Heart right ventricle (tissue), 16 donors: ENCODE measurements at regions of chr14 and their contacts with region 1.

Region 1: GRCh38 chr14:73753959-73754882 is 40.0 kb upstream of the PNMA1 start:
- DNase-seq: peak in 1 of 2 donors; percentile 41
- ATAC-seq: peak; percentile 2 to 39 (median 19)
- H3K4me3 ChIP-seq: peak overlapping the region in 7 of 10 donors; percentile 12 to 43 (median 22)
- H3K27ac ChIP-seq: peak overlapping the region; percentile 72 to 100 (median 98)
- H3K4me1 ChIP-seq: peaks cover 84 to 99% (median 97%) of the 10 kb centered on the region in 9 donors
- H3K27me3 ChIP-seq: no peaks in the 10 kb centered on the region
- CTCF ChIP-seq: no peak

Region 2: GRCh38 chr14:72763892-72764291 is 990.3 kb before region 1 on chr14:
- intact Hi-C with region 1: no loop called
- DNase-seq: no peak
- ATAC-seq: no peak
- H3K4me3 ChIP-seq: no peak overlapping the region
- H3K27ac ChIP-seq: no peak overlapping the region
- H3K4me1 ChIP-seq: no peaks in the 10 kb centered on the region
- H3K27me3 ChIP-seq: no peaks in the 10 kb centered on the region
- CTCF ChIP-seq: no peak

Region 3: DNA sequence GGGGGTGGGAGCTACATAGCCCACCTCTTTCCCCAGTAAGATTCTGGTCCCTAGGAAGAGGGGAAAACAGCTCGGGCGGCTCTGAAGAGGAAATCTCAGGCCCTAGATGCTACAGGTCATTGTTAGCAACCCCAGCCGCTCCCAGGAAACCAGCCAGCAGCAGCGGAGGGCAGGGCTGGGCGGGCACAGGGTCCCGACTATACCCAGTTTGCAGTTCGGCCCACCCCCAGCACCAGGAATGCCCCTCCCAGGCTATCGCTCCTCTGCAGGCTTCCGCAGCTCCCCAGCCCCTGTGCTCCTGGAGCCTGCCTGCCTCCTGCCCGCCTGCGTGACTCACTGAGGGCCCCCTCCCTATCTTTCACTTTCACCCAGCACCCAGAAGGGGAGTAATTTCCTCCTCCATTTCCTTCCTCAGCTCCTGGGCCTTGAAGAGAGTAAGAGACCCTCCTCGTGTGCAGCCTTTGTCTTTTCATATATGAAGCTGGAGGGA is 12.8 kb before region 1 on chr14:
- intact Hi-C with region 1: loop called in 1 of 10 experiments (anchors 2 kb)
- DNase-seq: peak; percentile 81 to 84
- ATAC-seq: peak; percentile 75 to 90 (median 81)
- H3K4me3 ChIP-seq: peak overlapping the region in 8 of 10 donors; percentile 11 to 44 (median 36)
- H3K27ac ChIP-seq: peak overlapping the region; percentile 26 to 89 (median 85)
- H3K4me1 ChIP-seq: peaks cover 75 to 86% (median 81%) of the 10 kb centered on the region in 9 donors
- H3K27me3 ChIP-seq: no peaks in the 10 kb centered on the region
- CTCF ChIP-seq: peak in 1 of 9 donors; percentile 9

Region 4: DNA sequence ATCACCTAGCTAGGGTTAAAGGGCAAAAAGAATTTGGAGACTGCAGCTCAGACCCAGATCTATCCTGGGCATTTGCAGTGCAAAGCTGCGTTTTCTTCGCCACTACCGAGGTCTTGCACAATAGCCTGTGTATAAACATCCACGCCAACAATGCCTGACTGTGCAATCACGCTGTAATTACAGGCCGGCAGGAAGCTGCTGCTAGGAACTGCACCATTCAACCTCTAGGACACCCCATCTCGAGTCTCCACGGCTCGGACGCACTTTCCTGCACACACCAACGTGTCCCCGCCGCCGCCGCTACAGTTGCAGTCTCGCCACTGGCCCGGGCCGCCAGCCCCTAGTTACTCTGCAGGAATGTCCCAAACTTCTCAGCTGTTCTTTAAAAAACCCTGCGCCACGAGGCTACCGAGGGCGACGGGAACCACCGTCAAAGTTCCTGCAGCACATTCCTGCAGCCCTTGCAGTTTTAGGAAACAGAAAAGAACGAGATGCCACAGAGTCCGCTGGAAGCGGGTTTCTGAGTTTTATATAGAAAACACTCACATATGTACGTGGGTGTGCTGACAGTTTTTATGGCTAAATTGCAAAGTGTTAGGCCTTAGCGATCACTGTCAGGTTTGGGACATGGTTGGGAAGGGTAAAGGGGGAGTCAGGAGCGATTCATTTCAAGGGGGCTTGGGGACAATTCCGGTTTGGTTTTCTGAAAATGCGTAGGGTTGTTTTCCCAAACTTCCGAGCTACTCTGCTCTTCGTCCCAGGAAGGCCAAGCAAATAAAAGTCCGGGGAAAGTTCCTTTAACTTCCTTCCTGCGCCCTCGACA is 31.9 kb after region 1 on chr14:
- intact Hi-C with region 1: loop called in 8 of 10 experiments (anchors 2 to 5 kb)
- DNase-seq: peak; percentile 65 to 73
- ATAC-seq: peak; percentile 67 to 78 (median 74)
- H3K4me3 ChIP-seq: peak overlapping the region; percentile 48 to 98 (median 76)
- H3K27ac ChIP-seq: peak overlapping the region; percentile 97 to 100 (median 98)
- H3K4me1 ChIP-seq: peaks cover 44 to 89% (median 77%) of the 10 kb centered on the region in 9 donors
- H3K27me3 ChIP-seq: no peaks in the 10 kb centered on the region
- CTCF ChIP-seq: peak in 4 of 9 donors; percentile 13 to 38 (median 26)